AG04450 (cell line): ENCODE measurements at regions of chr7 and their contacts with region 1.

Region 1: DNA sequence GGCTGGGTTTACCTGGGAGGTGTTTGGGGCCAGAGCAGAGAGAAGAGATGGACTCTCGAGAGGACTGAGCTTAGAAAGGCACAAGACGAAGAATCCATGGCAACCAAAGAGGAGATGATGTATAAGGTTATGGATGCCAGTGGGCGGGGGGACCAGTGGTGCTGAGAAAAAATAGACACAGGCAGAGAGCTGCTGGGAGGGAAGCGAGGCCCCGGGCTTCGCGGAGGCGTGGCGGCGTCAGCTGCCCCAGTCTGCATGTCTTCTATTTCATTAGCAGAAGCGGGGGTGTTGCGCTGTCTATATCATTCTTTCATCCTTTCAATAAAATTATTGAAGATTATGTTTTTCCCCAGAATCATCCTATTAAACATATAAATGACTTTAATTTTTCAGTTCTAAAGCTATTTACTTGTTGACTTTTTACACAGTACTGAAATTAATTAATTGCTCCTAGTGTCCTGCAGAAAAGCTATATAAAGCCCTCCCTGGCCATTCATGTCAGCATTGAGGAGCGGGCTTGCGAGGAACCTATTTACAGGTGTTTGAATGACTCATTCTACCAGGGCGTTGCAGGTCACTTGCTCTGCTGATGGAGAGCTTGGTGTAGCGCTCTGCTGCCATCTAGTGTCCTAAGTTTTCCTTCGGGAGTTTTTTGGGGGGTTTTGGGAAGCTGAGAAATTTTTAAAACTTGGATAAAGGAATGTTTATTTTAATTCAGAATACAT is 42.9 kb upstream of the BHLHA15 start:
- DNase-seq: peak; percentile 34
- H3K4me3 ChIP-seq: no peak overlapping the region
- H3K27ac ChIP-seq: no peak overlapping the region
- H3K27me3 ChIP-seq: no peaks in the 10 kb centered on the region
- CTCF ChIP-seq: peak; percentile 93

Region 2: DNA sequence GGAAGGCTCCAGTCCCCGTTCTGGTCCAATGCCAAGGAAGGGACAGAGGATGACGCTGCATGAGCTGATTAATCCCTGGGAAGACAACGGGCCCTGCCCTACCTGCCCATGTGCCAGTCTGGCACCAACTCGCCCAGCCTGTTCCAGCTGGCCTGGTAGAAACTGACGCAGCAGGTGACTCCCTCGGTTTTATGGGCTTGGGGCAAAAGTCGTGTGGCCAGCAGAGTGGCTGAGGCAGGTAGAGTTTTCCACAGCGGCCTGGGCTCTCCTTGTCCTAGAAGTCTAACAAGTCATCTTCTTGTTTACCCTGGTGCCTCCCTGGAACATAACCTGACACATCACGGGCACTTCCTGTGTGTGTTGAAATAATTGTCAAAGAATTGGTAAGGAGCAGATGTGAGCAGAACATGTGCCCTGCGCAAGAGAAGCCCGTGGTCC is 82.0 kb before region 1 on chr7:
- CTCF ChIA-PET with region 1: interaction called, 10 read pairs
- POLR2A ChIA-PET with region 1: no interaction called
- DNase-seq: no peak
- H3K4me3 ChIP-seq: no peak overlapping the region
- H3K27ac ChIP-seq: no peak overlapping the region
- H3K27me3 ChIP-seq: no peaks in the 10 kb centered on the region
- CTCF ChIP-seq: no peak

Region 3: DNA sequence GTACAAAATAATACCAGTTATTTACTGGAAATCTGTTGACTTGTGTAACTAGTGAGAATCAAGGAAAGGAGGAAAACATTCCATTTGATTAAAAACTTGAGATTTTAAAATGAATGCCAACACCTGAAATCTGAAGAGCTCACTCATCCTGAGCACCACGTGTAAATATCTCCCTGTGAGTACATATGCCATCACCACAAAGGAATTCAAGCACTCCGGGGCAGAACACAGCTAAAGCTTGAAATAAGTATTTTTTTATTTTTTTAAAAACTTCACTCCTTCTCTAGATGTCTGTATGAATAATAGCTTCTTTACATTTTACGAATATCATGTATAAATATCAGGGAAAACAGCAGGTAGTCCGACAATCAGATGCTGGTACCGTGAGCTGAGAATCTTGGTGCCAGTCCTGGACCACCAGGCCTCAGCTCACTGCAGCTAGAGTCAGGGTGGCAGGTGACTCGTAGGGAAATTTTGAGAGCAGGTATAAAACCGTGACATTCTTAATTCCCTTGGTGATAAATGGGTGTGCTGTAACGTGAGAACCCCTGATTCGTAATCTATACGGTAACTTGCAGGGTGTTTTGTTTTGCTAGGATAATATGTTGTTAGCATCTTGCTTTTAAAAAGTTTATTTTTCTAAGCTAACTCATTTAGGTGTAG is 49.0 kb before region 1 on chr7:
- CTCF ChIA-PET with region 1: interaction called, 53 read pairs
- POLR2A ChIA-PET with region 1: interaction called, 4 read pairs
- DNase-seq: peak; percentile 16
- H3K4me3 ChIP-seq: no peak overlapping the region
- H3K27ac ChIP-seq: peak overlapping the region; percentile 31
- H3K27me3 ChIP-seq: no peaks in the 10 kb centered on the region
- CTCF ChIP-seq: no peak

Region 4: DNA sequence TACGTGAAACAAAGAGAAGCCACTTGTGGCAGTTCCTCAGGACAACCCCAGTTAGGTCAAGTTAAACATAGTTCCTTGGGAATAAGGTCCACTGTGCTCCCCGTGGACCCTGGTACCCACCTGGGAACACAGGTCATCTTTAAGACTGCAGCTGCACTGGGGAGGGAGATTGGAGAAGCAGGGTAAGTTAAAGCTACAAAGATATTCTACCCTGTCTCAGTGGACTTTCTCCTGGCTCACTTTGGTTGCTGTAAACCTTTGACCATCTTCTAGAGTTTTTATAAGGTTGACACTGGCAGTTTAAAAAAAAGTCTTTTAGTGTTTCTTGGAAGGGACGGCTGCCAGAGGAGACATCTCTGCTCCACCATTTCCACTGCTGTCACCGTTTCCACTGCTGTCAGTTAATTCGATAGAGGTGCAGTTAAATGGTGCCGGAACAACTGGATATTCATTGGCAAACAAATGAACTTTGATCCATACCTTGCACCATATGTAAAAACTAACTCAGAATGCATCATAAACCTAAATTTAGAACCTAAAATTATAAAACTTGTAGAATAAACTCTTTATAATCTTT is 19.1 kb before region 1 on chr7:
- CTCF ChIA-PET with region 1: interaction called, 36 read pairs
- POLR2A ChIA-PET with region 1: interaction called, 3 read pairs
- DNase-seq: no peak
- H3K4me3 ChIP-seq: no peak overlapping the region
- H3K27ac ChIP-seq: no peak overlapping the region
- H3K27me3 ChIP-seq: no peaks in the 10 kb centered on the region
- CTCF ChIP-seq: no peak

Region 5: DNA sequence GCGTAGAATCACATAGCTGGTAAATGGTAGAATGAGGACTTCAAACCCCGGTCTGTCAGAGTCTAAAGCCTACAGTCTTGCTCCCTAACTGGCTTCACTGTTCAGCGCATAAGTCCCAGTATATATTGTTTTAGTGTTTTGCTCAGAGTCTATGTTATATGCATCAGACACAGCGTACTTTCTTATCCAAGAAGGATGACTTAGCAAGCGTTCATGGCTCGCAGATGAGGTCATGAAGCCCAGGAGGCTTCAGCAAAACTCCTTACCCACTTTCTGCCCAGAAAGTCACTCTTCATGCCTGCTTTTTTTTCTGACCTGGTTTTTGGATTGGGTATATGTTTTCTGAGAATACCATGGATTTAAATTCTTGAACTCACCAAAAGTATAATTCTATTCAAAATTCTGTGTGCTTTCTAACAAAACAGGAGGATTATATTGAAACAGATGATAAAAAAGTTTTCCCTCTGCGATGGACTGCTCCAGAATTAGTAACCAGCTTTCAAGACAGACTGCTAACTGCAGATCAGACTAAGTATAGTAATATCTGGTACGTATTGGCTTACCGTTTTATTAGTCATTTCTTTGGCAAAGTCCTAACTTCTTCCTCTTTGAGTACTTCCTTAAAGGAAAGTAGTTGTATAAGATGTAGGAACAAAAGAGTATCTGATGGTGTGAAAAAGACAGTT is 18.3 kb after region 1 on chr7:
- CTCF ChIA-PET with region 1: interaction called, 89 read pairs
- POLR2A ChIA-PET with region 1: no interaction called
- DNase-seq: peak; percentile 21
- H3K4me3 ChIP-seq: no peak overlapping the region
- H3K27ac ChIP-seq: peak overlapping the region; percentile 71
- H3K27me3 ChIP-seq: no peaks in the 10 kb centered on the region
- CTCF ChIP-seq: no peak